OCI-LY7 (cell line): ENCODE measurements at regions of chr21 and their contacts with region 1.

Region 1: DNA sequence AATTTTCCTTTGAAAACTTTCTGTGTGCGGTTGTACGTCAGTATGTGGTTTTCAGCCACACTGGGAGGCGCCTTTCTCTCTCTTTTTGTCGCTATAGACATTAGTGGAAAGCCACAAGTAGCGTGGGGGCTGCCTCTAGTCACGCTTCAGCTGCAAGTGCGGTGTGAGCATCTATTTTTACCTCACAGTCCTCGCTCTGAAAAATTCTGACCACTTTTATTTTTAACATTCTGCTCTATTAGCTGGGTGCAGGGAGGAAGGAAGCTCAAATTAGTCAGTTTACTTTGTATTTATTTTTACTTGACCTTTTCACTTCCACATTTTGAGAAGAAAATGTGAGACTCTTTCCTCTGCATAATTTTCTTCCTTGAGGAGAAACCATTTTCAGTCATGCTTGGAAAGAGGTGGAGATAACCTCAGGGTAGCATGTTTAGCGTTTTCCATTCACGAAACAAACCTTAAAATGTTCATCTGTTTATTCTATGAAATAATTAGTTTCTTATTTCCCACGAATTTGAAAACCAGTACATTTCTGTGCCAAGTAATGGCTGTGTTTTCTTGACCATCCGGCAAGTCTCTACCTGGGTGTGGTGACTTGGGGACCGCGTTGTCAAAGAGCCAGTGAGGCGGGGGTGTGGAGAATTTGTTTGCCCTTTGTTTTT is 35.6 kb downstream of the ADARB1 start:
- DNase-seq: peak; percentile 95
- H3K4me3 ChIP-seq: peak overlapping the region; percentile 44
- H3K27ac ChIP-seq: peak overlapping the region; percentile 81
- H3K4me1 ChIP-seq: peaks cover 69% of the 10 kb centered on the region
- CTCF ChIP-seq: peak; percentile 49; the same call in 1 of the 2 replicates

Region 2: GRCh38 chr21:45074048-45074817 is 35.7 kb before region 1 on chr21 and contains the start of gene ADARB1:
- CTCF ChIA-PET with region 1: no interaction called
- POLR2A ChIA-PET with region 1: interaction called, 3 read pairs
- intact Hi-C with region 1: loop called (anchors 2 kb)
- DNase-seq: peak; percentile 85
- H3K4me3 ChIP-seq: peak within 1 kb of the TSS; percentile 98
- H3K27ac ChIP-seq: no peak within 1 kb of the TSS
- H3K4me1 ChIP-seq: no peaks in the 10 kb centered on the region
- CTCF ChIP-seq: no peak
- total RNA-seq, gene ADARB1: 6.6 and 17.4 TPM in 2 replicates